ENCODE measurements at regions of chr4 and their contacts with region 1.

Region 1: GRCh38 chr4:10526429-10527222 is 69.4 kb upstream of the ZNF518B start:
- DNase-seq: no peak
- H3K4me3 Mint-ChIP-seq: no peak overlapping the region
- H3K27ac Mint-ChIP-seq: no peak overlapping the region
- H3K4me1 Mint-ChIP-seq: no peaks in the 10 kb centered on the region
- H3K27me3 Mint-ChIP-seq: peaks cover 8% of the 10 kb centered on the region
- CTCF ChIP-seq: no peak

Region 2: GRCh38 chr4:10173037-10173753 is 353.4 kb before region 1 on chr4:
- CTCF ChIA-PET with region 1: no interaction called
- intact Hi-C with region 1: loop called (anchors 5 kb)
- DNase-seq: no peak
- H3K4me3 Mint-ChIP-seq: no peak overlapping the region
- H3K27ac Mint-ChIP-seq: no peak overlapping the region
- H3K4me1 Mint-ChIP-seq: no peaks in the 10 kb centered on the region
- H3K27me3 Mint-ChIP-seq: peaks cover 7% of the 10 kb centered on the region
- CTCF ChIP-seq: no peak

Region 3: GRCh38 chr4:10311939-10312338 is 214.7 kb before region 1 on chr4:
- CTCF ChIA-PET with region 1: no interaction called
- intact Hi-C with region 1: no loop called
- DNase-seq: no peak
- H3K4me3 Mint-ChIP-seq: no peak overlapping the region
- H3K27ac Mint-ChIP-seq: no peak overlapping the region
- H3K4me1 Mint-ChIP-seq: no peaks in the 10 kb centered on the region
- H3K27me3 Mint-ChIP-seq: peaks cover 34% of the 10 kb centered on the region
- CTCF ChIP-seq: no peak

Region 4: DNA sequence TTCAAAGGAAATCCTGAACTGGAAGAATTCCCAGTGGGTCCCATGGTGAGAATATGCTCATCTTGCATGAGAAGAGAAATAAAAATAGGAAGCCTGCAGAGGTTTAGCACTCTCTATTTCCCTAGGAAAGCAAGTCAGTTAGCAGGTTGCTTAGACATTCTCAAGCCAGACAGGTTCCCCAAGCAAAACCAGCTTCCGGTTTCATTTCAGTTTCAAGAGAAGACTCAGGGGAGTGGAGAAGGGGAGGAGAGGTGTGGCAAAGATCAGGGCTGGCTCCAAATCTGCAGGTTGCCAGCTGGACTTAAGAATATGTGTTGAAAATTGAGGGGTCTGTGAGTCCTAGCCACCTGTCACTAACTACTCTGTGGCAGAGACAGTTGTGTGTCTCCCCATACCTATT is 50.4 kb after region 1 on chr4:
- CTCF ChIA-PET with region 1: no interaction called
- intact Hi-C with region 1: no loop called
- DNase-seq: no peak
- H3K4me3 Mint-ChIP-seq: no peak overlapping the region
- H3K27ac Mint-ChIP-seq: no peak overlapping the region
- H3K4me1 Mint-ChIP-seq: no peaks in the 10 kb centered on the region
- H3K27me3 Mint-ChIP-seq: peaks cover 36% of the 10 kb centered on the region
- CTCF ChIP-seq: no peak